Naive thymus-derived CD4-positive, alpha-beta T cell (primary cell): ENCODE measurements at regions of chr2 and their contacts with region 1.

Region 1: DNA sequence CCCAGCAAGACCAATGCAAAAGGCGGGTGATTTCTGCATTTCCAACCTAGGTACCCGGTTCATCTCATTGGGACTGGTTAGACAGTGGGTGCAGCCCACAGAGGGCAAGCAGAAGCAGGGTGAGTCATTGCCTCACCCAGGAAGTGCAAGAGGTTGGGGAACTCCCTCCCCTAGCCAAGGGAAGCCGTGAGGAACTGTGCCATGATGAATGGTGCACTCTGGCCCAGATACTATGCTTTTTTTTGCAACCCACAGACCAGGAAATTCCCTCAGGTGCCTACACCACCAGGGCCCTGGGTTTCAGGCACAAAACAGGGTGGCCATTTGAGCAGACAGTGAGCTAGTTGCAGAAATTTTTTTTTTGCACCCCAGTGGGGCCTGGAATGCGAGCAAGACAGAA is 662.6 kb upstream of the ACVR2A start:
- DNase-seq: peak in 3 of 9 donors; percentile 1 to 56 (median 12)
- ATAC-seq: peak; percentile 79
- H3K4me3 ChIP-seq: no peak overlapping the region
- H3K4me3 Mint-ChIP-seq: peak overlapping the region in 1 of 10 donors; percentile 48
- H3K27ac ChIP-seq: no peak overlapping the region
- H3K27ac Mint-ChIP-seq: peak overlapping the region in 1 of 9 donors; percentile 82
- H3K4me1 ChIP-seq: no peaks in the 10 kb centered on the region
- H3K4me1 Mint-ChIP-seq: peaks cover 0 to 32% (median 10%) of the 10 kb centered on the region in 7 donors
- H3K27me3 ChIP-seq: no peaks in the 10 kb centered on the region
- H3K27me3 Mint-ChIP-seq: peaks cover 0 to 37% (median 11%) of the 10 kb centered on the region in 5 donors

Region 2: GRCh38 chr2:147110317-147110716 is 71.9 kb before region 1 on chr2:
- CTCF ChIA-PET with region 1: no interaction called
- POLR2A ChIA-PET with region 1: no interaction called
- intact Hi-C with region 1: no loop called
- DNase-seq: no peak
- ATAC-seq: no peak
- H3K4me3 ChIP-seq: no peak overlapping the region
- H3K4me3 Mint-ChIP-seq: no peak overlapping the region
- H3K27ac ChIP-seq: no peak overlapping the region
- H3K27ac Mint-ChIP-seq: no peak overlapping the region
- H3K4me1 ChIP-seq: no peaks in the 10 kb centered on the region
- H3K4me1 Mint-ChIP-seq: peaks cover 0 to 2% (median 0%) of the 10 kb centered on the region in 7 donors
- H3K27me3 ChIP-seq: no peaks in the 10 kb centered on the region
- H3K27me3 Mint-ChIP-seq: peaks cover 0 to 14% (median 5%) of the 10 kb centered on the region in 5 donors

Region 3: GRCh38 chr2:147297820-147298219 is 115.6 kb after region 1 on chr2:
- CTCF ChIA-PET with region 1: no interaction called
- POLR2A ChIA-PET with region 1: no interaction called
- intact Hi-C with region 1: loop called in 1 of 2 experiments (anchors 2 kb)
- DNase-seq: peak in 7 of 9 donors; percentile 13 to 63 (median 32)
- ATAC-seq: peak; percentile 76
- H3K4me3 ChIP-seq: no peak overlapping the region
- H3K4me3 Mint-ChIP-seq: peak overlapping the region in 8 of 10 donors; percentile 9 to 53 (median 38)
- H3K27ac ChIP-seq: no peak overlapping the region
- H3K27ac Mint-ChIP-seq: peak overlapping the region; percentile 53 to 94 (median 85)
- H3K4me1 ChIP-seq: peaks cover 18 to 26% of the 10 kb centered on the region in 2 donors
- H3K4me1 Mint-ChIP-seq: peaks cover 10 to 60% (median 29%) of the 10 kb centered on the region in 7 donors
- H3K27me3 ChIP-seq: no peaks in the 10 kb centered on the region
- H3K27me3 Mint-ChIP-seq: peaks cover 0 to 17% (median 0%) of the 10 kb centered on the region in 5 donors

Region 4: GRCh38 chr2:147425437-147426029 is 243.3 kb after region 1 on chr2:
- CTCF ChIA-PET with region 1: no interaction called
- POLR2A ChIA-PET with region 1: no interaction called
- intact Hi-C with region 1: no loop called
- DNase-seq: no peak
- ATAC-seq: no peak
- H3K4me3 ChIP-seq: no peak overlapping the region
- H3K4me3 Mint-ChIP-seq: no peak overlapping the region
- H3K27ac ChIP-seq: no peak overlapping the region
- H3K27ac Mint-ChIP-seq: no peak overlapping the region
- H3K4me1 ChIP-seq: no peaks in the 10 kb centered on the region
- H3K4me1 Mint-ChIP-seq: no peaks in the 10 kb centered on the region
- H3K27me3 ChIP-seq: no peaks in the 10 kb centered on the region
- H3K27me3 Mint-ChIP-seq: peaks cover 0 to 3% (median 0%) of the 10 kb centered on the region in 5 donors